CD4-positive, alpha-beta memory T cell (primary cell): ENCODE measurements at regions of chr5 and their contacts with region 1.

Region 1: DNA sequence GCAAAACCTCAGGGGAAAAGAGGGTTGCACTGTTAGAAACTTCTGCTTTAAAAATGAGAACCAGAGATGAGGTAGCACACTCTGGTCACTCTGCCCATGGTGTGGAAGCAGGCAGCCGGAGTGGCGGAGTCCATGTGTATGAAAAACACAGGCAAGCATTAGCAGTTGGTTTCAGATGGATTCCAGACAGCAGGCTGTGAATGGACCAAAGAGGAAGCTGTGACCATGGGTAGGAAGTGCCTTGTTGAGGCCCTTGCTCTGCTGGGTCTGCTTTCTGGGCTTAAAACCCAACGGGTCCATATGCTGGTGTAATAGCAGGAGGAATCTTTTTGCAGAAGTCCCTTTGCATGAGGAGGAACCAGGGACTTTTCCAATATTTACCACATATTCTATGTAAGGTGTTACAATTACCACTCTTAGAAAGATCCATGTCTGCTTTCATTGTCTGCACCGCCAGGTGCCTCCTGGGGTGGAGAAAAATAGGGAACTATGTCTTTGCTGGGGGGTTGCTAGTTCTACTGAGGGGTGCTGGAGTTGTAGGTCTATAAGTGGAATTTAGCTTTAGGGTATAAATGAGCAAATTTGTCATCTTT is 77.0 kb downstream of the ANKRD55 start:
- DNase-seq: no peak
- H3K4me3 ChIP-seq: no peak overlapping the region
- H3K4me3 Mint-ChIP-seq: peak overlapping the region; percentile 34 to 89 (median 60)
- H3K27ac ChIP-seq: peak overlapping the region; percentile 0
- H3K27ac Mint-ChIP-seq: peak overlapping the region; percentile 90 to 95 (median 91)
- H3K4me1 ChIP-seq: peaks cover 70% of the 10 kb centered on the region
- H3K4me1 Mint-ChIP-seq: peaks cover 51 to 88% (median 72%) of the 10 kb centered on the region in 4 donors
- H3K27me3 ChIP-seq: no peaks in the 10 kb centered on the region
- H3K27me3 Mint-ChIP-seq: no peaks in the 10 kb centered on the region

Region 2: DNA sequence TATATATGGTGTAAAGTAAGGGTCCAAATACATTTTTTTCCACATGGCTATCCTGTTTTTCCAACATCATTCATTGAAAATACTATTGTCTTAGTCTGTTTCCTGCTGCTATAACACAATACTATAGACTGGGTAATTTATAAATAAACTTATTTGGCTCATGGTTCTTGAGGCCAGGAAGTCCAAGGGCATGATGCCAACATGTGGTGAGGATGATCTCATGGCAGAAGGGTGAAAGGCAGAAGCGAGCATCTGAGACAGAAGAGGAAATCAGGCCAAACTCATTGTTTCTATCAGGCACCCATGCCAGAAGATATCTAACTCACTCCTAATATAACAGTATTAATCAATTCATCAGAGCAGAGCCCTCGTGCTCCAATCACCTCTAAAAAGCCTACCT is 34.4 kb after region 1 on chr5:
- CTCF ChIA-PET with region 1: no interaction called
- POLR2A ChIA-PET with region 1: no interaction called
- intact Hi-C with region 1: loop called (anchors 5 kb)
- DNase-seq: peak; percentile 44 to 64 (median 61)
- H3K4me3 ChIP-seq: no peak overlapping the region
- H3K4me3 Mint-ChIP-seq: peak overlapping the region in 1 of 8 donors; percentile 1
- H3K27ac ChIP-seq: no peak overlapping the region
- H3K27ac Mint-ChIP-seq: peak overlapping the region in 4 of 7 donors; percentile 9 to 44 (median 38)
- H3K4me1 ChIP-seq: peaks cover 16% of the 10 kb centered on the region
- H3K4me1 Mint-ChIP-seq: peaks cover 8 to 9% (median 9%) of the 10 kb centered on the region in 4 donors
- H3K27me3 ChIP-seq: no peaks in the 10 kb centered on the region
- H3K27me3 Mint-ChIP-seq: no peaks in the 10 kb centered on the region